ENCODE measurements at regions of chr4 and their contacts with region 1.

Region 1: GRCh38 chr4:154618708-154619315 is 6.4 kb upstream of the FGG start:
- DNase-seq: peak; percentile 27 to 59
- H3K4me3 ChIP-seq: no peak overlapping the region
- H3K27ac ChIP-seq: no peak overlapping the region
- H3K4me1 ChIP-seq: no peaks in the 10 kb centered on the region
- H3K27me3 ChIP-seq: peaks cover 0 to 1% (median 0%) of the 10 kb centered on the region in 4 experiments; a peak in 1 of 7 replicates
- CTCF ChIP-seq: peak; percentile 25 to 77 (median 72)
- EP300 ChIP-seq: no peak
- POLR2A ChIP-seq: no peak
- RAD21 ChIP-seq: peak; percentile 79 to 82

Region 2: DNA sequence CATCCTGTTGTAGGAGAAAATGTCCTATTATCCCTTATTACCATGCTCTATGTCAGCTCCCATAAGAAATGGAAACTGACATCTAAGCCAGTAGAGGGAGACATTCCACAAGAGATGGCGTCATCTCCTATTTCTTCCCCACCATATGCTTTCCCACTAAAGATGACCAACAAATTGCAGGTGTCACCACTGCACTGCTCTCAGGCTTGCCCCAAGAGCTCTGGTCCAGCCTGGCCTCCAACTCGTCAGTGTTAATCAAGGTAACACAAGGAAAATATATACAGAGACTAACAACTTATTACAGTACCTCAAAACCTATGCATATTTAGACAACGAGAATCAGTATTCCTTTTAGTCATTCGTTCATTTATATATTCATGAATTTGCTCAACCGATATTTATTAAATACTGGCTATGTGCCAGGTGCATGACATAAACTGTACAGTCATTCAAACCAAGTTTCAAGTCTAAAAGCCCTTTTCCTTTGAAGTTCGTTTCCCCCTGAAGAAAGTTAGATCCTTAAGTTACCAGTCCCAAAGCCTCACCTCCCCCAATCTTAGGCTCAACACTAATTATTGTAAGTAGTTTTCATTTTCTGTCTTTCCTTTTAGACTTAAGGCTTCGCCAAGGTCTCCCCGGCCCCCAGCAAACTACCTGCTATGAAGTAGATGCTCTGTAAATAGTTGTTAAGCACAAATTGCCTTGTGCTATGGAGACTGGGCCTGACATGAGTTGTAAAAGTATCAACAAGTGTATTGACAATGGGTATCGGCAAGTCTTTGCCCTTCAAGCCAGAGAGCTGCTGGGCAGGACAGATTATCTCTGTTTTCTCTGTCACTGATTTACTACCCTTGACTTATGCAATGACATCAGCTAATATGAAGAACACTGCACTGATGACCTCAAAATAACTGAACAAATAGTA is 59.1 kb before region 1 on chr4:
- CTCF ChIA-PET with region 1: interaction called, 283 read pairs
- POLR2A ChIA-PET with region 1: interaction called, 3 read pairs
- DNase-seq: peak in 1 of 2 experiments; percentile 9
- H3K4me3 ChIP-seq: no peak overlapping the region
- H3K27ac ChIP-seq: no peak overlapping the region
- H3K4me1 ChIP-seq: no peaks in the 10 kb centered on the region
- H3K27me3 ChIP-seq: no peaks in the 10 kb centered on the region
- CTCF ChIP-seq: peak in 2 of 3 experiments; percentile 82 to 85; a peak in 3 of 4 replicates
- EP300 ChIP-seq: no peak
- POLR2A ChIP-seq: no peak
- RAD21 ChIP-seq: peak; percentile 93 to 94

Region 3: GRCh38 chr4:154586296-154587033 is 32.3 kb before region 1 on chr4:
- CTCF ChIA-PET with region 1: interaction called, 30 read pairs
- POLR2A ChIA-PET with region 1: no interaction called
- DNase-seq: no peak
- H3K4me3 ChIP-seq: no peak overlapping the region
- H3K27ac ChIP-seq: no peak overlapping the region
- H3K4me1 ChIP-seq: 0 out of 7 replicates have a peak, but pooled peaks cover 0 to 3% (median 0%) of the 10 kb centered on the region in 4 experiments
- H3K27me3 ChIP-seq: no peaks in the 10 kb centered on the region
- CTCF ChIP-seq: no peak
- EP300 ChIP-seq: no peak
- POLR2A ChIP-seq: no peak
- RAD21 ChIP-seq: no peak

Region 4: DNA sequence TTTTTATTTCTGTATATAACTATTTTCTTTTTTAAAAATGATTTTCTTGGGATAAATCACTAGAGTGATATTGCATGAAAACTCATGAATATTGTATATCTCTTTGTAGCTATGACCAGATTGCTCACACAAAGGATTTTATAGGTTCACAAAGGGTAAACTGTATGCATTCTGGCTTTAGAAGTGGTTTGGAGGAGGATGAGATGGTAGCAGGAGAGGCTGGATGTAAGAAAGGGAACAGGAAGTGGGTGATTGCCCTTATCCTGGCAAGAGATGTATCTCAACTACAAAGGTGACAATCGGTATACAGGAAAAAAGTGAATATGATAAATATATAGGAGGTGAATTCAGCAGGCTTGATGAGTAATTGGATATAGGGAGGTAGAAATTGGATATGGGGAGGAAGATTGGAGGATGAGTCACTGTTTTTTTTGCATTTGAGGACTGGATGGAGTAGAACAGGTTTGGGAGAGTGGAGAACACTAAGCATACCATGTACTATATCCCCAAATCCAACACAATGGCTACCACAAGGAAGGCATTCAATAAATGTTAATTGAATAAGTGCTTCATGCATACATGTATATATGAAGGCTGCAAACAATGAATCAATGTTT is 16.3 kb before region 1 on chr4:
- CTCF ChIA-PET with region 1: interaction called, 20 read pairs
- POLR2A ChIA-PET with region 1: no interaction called
- DNase-seq: no peak
- H3K4me3 ChIP-seq: no peak overlapping the region
- H3K27ac ChIP-seq: no peak overlapping the region
- H3K4me1 ChIP-seq: peaks cover 0 to 3% (median 0%) of the 10 kb centered on the region in 4 experiments; a peak in 1 of 7 replicates
- H3K27me3 ChIP-seq: no peaks in the 10 kb centered on the region
- CTCF ChIP-seq: no peak
- EP300 ChIP-seq: no peak
- POLR2A ChIP-seq: no peak
- RAD21 ChIP-seq: no peak

Region 5: DNA sequence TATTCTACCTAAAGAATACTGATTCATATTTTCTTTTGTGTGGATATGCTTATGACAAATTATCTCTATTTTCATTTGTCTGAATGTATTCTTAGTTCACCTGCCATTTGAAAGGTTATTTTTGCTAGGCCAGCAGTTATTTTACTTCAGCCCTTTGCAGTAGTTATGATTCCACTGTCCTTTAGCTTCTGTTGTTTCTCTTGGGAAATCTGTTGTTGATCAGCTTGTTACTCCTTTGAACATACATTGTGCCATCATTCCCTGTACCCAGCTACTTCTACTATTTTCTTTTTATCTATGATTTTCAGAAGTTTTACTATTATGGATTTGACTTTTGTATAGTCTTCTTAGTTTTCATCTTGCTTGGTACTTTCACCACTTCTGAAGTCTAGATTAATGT is 199.4 kb after region 1 on chr4:
- CTCF ChIA-PET with region 1: no interaction called
- POLR2A ChIA-PET with region 1: no interaction called
- DNase-seq: no peak
- H3K4me3 ChIP-seq: no peak overlapping the region
- H3K27ac ChIP-seq: no peak overlapping the region
- H3K4me1 ChIP-seq: no peaks in the 10 kb centered on the region
- H3K27me3 ChIP-seq: no peaks in the 10 kb centered on the region
- CTCF ChIP-seq: no peak
- EP300 ChIP-seq: no peak
- POLR2A ChIP-seq: no peak
- RAD21 ChIP-seq: no peak

Measured in H1 (cell line).